Gastrocnemius medialis (tissue), 4 donors: ENCODE measurements at regions of chr6 and their contacts with region 1.

Region 1: DNA sequence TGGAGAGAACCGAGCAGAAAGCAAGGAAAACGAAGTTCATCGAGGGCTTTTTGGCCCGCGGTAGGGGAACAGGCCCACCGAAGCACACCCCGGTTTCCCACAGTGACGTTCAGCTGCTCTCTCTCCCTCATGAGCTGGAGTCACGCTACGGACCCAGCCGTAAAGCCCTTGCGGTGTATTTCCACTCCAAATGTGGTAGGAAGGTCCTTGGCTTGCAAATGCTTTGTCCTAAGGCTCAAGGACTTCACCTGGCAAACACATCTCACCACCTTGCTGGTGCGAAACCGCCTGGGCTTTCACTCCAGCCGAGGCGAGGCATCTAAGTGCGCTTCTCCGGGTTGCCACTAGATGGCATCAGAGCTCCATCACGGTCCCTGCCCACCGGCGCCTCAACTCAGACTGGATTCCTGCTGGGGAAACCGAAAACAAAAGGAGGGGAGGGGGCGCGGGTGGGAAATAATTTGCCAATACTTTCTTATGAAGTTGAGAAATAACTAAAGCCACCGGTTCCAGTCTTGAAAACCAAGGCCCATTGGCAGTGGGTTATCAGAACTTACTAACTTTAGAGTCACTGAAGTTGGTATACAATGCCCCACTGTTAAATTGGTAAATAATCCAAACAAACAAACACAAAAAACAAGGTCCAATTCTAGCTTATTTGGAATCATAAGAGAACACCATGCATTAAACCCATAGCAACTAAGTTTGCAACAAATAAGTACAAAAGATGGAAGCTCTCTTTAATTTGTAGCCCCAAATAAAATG is 13.4 kb upstream of the FOXC1 start:
- DNase-seq: peak in 1 of 2 donors; percentile 44
- ATAC-seq: peak; percentile 80 to 82
- H3K4me3 ChIP-seq: peak overlapping the region in 3 of 4 donors; percentile 8 to 30 (median 9)
- H3K27ac ChIP-seq: no peak overlapping the region
- H3K4me1 ChIP-seq: peaks cover 2 to 3% of the 10 kb centered on the region in 2 donors
- H3K27me3 ChIP-seq: peaks cover 22 to 32% (median 30%) of the 10 kb centered on the region in 3 donors
- CTCF ChIP-seq: peak; percentile 82 to 98 (median 93)
- POLR2A ChIP-seq: no peak

Region 2: DNA sequence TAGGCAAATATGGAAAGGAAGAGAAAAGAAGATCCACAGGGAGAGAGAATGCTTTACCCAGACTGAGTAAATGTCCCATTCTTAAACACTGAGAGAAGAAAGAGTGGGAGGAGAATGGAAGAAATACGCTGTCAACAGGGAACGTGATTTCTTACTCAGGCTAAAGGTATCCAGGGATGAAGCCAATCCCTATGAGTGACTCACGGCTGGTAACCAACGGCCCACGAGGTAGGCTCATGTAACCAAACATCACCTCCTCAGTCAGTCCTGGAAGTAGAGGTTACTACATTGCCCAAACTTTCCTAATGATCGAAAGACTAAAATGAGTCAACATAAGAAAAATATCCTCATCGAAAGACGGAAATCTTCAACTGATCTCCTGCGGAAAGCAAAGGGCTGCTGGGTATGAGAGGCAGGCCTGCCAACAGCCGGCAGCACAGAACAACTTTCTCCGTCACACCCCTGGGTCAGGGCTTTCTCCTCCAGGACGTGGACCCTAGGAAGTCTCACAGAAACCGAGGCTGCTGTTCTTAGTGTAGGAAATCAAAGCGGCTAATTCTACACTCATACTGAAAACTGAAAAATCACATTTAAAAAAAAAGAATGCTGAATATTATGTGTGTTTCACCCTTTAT is 356.6 kb after region 1 on chr6:
- in situ Hi-C with region 1: no loop called
- intact Hi-C with region 1: no loop called
- DNase-seq: no peak
- ATAC-seq: peak in 1 of 2 donors; percentile 24
- H3K4me3 ChIP-seq: no peak overlapping the region
- H3K27ac ChIP-seq: no peak overlapping the region
- H3K4me1 ChIP-seq: no peaks in the 10 kb centered on the region
- H3K27me3 ChIP-seq: no peaks in the 10 kb centered on the region
- CTCF ChIP-seq: no peak
- POLR2A ChIP-seq: no peak

Region 3: DNA sequence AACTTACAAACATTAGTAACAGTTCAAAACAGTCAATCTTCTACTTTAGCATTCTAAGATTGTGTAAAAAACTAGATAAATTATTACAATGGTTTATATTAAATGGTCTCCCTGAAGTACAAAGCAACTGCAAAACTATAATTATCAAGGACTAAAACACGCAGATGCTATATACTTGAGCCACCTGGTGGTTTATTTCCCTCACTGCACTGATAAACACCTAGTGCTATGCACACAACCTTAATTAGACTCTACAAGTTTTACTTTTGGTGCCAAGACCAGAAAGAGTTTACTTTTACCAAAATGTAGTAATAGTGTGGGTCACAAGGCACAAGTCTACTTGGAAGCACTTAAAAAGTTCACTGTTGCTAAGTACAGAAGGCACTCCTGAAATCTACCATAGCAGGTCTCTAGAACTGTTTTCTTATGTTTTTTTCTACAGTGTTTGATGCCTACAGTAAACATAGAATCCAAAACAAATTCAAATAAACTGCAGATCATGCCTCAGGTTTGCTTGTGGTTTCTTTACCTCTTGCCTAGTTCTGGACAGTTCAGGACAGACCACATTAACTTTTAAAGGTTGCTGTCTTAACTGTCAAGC is 599.9 kb after region 1 on chr6:
- in situ Hi-C with region 1: loop called (anchors 10 to 25 kb)
- intact Hi-C with region 1: loop called (anchors 2 kb)
- DNase-seq: no peak
- ATAC-seq: peak; percentile 69 to 72
- H3K4me3 ChIP-seq: no peak overlapping the region
- H3K27ac ChIP-seq: no peak overlapping the region
- H3K4me1 ChIP-seq: peaks cover 0 to 2% of the 10 kb centered on the region in 2 donors
- H3K27me3 ChIP-seq: no peaks in the 10 kb centered on the region
- CTCF ChIP-seq: peak; percentile 65 to 79 (median 70)
- POLR2A ChIP-seq: no peak

Region 4: GRCh38 chr6:2353412-2354137 is 757.3 kb after region 1 on chr6:
- in situ Hi-C with region 1: loop called (anchors 10 kb)
- intact Hi-C with region 1: loop called (anchors 1 kb)
- DNase-seq: peak; percentile 22 to 31
- ATAC-seq: no peak
- H3K4me3 ChIP-seq: no peak overlapping the region
- H3K27ac ChIP-seq: no peak overlapping the region
- H3K4me1 ChIP-seq: no peaks in the 10 kb centered on the region
- H3K27me3 ChIP-seq: no peaks in the 10 kb centered on the region
- CTCF ChIP-seq: peak; percentile 37 to 73 (median 56)
- POLR2A ChIP-seq: no peak

Region 5: DNA sequence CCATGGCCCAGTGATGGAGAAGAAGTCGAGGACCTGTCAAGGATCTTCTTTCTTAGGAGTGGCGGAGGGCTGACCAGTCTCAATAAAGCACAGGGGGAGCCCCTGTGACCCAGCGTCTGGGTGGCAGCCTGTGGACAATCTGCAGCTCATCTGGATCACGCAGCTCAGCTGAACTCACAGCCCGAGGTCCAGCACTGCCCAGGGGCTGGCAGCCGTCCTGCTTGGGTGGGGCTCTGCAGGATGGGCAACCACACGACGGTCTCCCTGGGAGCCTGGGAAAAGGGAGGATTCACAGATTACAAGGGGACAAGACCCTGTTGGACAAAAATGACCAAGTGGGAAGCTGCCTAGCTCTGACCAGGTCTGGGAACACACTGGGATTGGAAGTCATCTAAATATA is 1043.6 kb after region 1 on chr6:
- in situ Hi-C with region 1: loop called in 3 of 4 experiments (anchors 5 to 10 kb)
- intact Hi-C with region 1: loop called (anchors 2 kb)
- DNase-seq: no peak
- ATAC-seq: no peak
- H3K4me3 ChIP-seq: no peak overlapping the region
- H3K27ac ChIP-seq: no peak overlapping the region
- H3K4me1 ChIP-seq: peaks cover under 1 to 2% of the 10 kb centered on the region in 2 donors
- H3K27me3 ChIP-seq: no peaks in the 10 kb centered on the region
- CTCF ChIP-seq: no peak
- POLR2A ChIP-seq: no peak

Region 6: GRCh38 chr6:2695454-2696095 is 1099.3 kb after region 1 on chr6:
- in situ Hi-C with region 1: no loop called
- intact Hi-C with region 1: loop called (anchors 2 kb)
- DNase-seq: no peak
- ATAC-seq: peak; percentile 55 to 70
- H3K4me3 ChIP-seq: no peak overlapping the region
- H3K27ac ChIP-seq: no peak overlapping the region
- H3K4me1 ChIP-seq: no peaks in the 10 kb centered on the region
- H3K27me3 ChIP-seq: no peaks in the 10 kb centered on the region
- CTCF ChIP-seq: peak in 1 of 5 experiments; percentile 31
- POLR2A ChIP-seq: no peak

Region 7: DNA sequence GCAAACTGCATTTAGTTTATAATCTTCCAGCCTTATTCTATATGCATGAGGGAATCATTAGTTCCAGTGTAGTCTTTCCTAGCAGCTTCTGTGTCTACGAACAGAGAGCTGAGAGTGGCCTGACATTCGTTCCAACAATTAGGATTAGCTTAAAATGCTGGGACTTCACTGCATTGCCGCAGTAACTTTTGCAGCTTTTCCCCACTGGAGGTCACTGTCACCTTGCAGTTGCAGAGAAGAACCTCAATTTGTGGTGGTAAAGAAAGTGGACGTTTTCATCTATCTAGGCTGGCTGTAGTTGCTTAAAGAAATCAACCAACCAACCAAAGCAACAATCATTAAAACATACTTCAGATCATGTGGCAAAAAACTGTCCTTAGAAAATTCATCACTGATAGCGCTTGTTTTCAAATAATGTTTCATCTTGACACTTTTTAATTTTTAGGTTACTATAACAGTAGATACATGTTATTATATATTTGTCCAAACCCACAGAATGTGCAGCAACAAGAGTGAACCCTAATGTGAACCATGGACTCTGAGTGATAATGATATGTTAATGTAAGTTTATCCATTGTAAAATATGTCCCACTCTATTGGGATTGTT is 1142.2 kb after region 1 on chr6:
- in situ Hi-C with region 1: loop called in 1 of 4 experiments (anchors 25 kb)
- intact Hi-C with region 1: no loop called
- DNase-seq: no peak
- ATAC-seq: peak in 1 of 2 donors; percentile 48
- H3K4me3 ChIP-seq: no peak overlapping the region
- H3K27ac ChIP-seq: no peak overlapping the region
- H3K4me1 ChIP-seq: peaks cover 13 to 25% of the 10 kb centered on the region in 2 donors
- H3K27me3 ChIP-seq: no peaks in the 10 kb centered on the region
- CTCF ChIP-seq: peak; percentile 49 to 67 (median 55)
- POLR2A ChIP-seq: no peak

Region 8: GRCh38 chr6:2749969-2750600 is 1153.8 kb after region 1 on chr6:
- in situ Hi-C with region 1: loop called in 1 of 4 experiments (anchors 25 kb)
- intact Hi-C with region 1: loop called (anchors 2 kb)
- DNase-seq: no peak
- ATAC-seq: no peak
- H3K4me3 ChIP-seq: peak overlapping the region in 3 of 4 donors; percentile 26 to 56 (median 43)
- H3K27ac ChIP-seq: peak overlapping the region in 2 of 4 donors; percentile 62 to 74
- H3K4me1 ChIP-seq: peaks cover 24 to 28% of the 10 kb centered on the region in 2 donors
- H3K27me3 ChIP-seq: no peaks in the 10 kb centered on the region
- CTCF ChIP-seq: peak; percentile 59 to 87 (median 75)
- POLR2A ChIP-seq: no peak